Activated CD4-positive, alpha-beta memory T cell treated with anti-CD3 and anti-CD28 coated beads for 36 hours (primary cell): ENCODE measurements at regions of chr2 and their contacts with region 1.

Region 1: GRCh38 chr2:156435715-156436496 is at the start of gene GPD2:
- DNase-seq: peak; percentile 67
- H3K4me3 Mint-ChIP-seq: peak within 1 kb of the TSS; percentile 89
- H3K27ac Mint-ChIP-seq: peak within 1 kb of the TSS; percentile 82
- H3K4me1 Mint-ChIP-seq: peaks cover 28% of the 10 kb centered on the region
- H3K27me3 Mint-ChIP-seq: no peaks in the 10 kb centered on the region
- total RNA-seq, gene GPD2: 27.3 to 28.6 TPM

Region 2: GRCh38 chr2:156476850-156477206 is 40.9 kb after region 1 on chr2:
- CTCF ChIA-PET with region 1: no interaction called
- POLR2A ChIA-PET with region 1: no interaction called
- intact Hi-C with region 1: loop called (anchors 5 kb)
- DNase-seq: peak; percentile 35
- H3K4me3 Mint-ChIP-seq: no peak overlapping the region
- H3K27ac Mint-ChIP-seq: peak overlapping the region; percentile 53
- H3K4me1 Mint-ChIP-seq: peaks cover 38% of the 10 kb centered on the region
- H3K27me3 Mint-ChIP-seq: no peaks in the 10 kb centered on the region

Region 3: GRCh38 chr2:156526950-156527636 is 91.2 kb after region 1 on chr2:
- CTCF ChIA-PET with region 1: no interaction called
- POLR2A ChIA-PET with region 1: no interaction called
- intact Hi-C with region 1: loop called (anchors 1 kb)
- DNase-seq: no peak
- H3K4me3 Mint-ChIP-seq: no peak overlapping the region
- H3K27ac Mint-ChIP-seq: no peak overlapping the region
- H3K4me1 Mint-ChIP-seq: peaks cover 9% of the 10 kb centered on the region
- H3K27me3 Mint-ChIP-seq: no peaks in the 10 kb centered on the region

Region 4: GRCh38 chr2:156538083-156538504 is 102.2 kb after region 1 on chr2:
- CTCF ChIA-PET with region 1: no interaction called
- POLR2A ChIA-PET with region 1: no interaction called
- intact Hi-C with region 1: no loop called
- DNase-seq: no peak
- H3K4me3 Mint-ChIP-seq: no peak overlapping the region
- H3K27ac Mint-ChIP-seq: no peak overlapping the region
- H3K4me1 Mint-ChIP-seq: peaks cover 24% of the 10 kb centered on the region
- H3K27me3 Mint-ChIP-seq: no peaks in the 10 kb centered on the region